A673 (cell line): ENCODE measurements at regions of chr13 and their contacts with region 1.

Region 1: DNA sequence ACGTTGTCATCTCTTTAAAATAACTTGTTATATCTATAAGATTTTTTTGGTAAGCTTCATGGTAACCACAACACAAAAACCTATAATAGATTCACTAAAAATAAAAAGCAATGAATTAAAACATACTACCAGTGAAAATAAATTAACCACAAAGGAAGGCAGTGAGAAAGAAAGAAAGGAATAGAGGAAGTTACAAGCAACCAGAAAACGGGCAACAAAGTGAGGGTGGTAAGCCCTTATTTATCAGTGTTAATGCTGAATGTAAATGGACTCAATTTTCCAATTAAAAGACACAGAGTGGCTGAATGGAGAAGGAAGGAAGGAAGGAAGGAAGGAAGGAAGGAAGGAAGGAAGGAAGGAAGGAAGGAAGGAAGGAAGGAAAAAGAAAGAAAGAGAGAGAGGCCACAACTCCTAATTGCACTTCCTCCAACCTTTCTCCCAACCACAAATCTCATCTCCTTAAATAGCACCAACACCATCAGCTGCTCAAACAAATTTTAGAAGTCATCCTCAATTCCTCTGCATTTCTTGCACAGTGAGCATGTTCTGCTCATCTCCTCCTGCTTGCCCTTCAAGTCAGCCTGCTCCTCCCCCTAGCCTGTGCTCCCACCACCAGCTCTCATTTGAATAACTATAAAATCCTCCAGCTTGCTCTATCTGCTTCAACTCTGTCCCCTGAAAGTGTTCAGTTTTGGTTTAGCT is 48.6 kb downstream of the CCNA1 start:
- DNase-seq: peak; percentile 99
- H3K4me3 ChIP-seq: no peak overlapping the region
- H3K27ac ChIP-seq: peak overlapping the region; percentile 100
- H3K4me1 ChIP-seq: peaks cover 42% of the 10 kb centered on the region
- H3K27me3 ChIP-seq: no peaks in the 10 kb centered on the region
- CTCF ChIP-seq: no peak

Region 2: GRCh38 chr13:36346222-36347083 is 134.4 kb before region 1 on chr13 and contains the start of gene SPART:
- CTCF ChIA-PET with region 1: no interaction called
- POLR2A ChIA-PET with region 1: no interaction called
- intact Hi-C with region 1: loop called (anchors 2 kb)
- DNase-seq: peak; percentile 97
- H3K4me3 ChIP-seq: peak within 1 kb of the TSS; percentile 67
- H3K27ac ChIP-seq: peak within 1 kb of the TSS; percentile 98
- H3K4me1 ChIP-seq: peaks cover 26% of the 10 kb centered on the region
- H3K27me3 ChIP-seq: no peaks in the 10 kb centered on the region
- CTCF ChIP-seq: peak; percentile 99
- total RNA-seq, gene SPART: 169 and 182 TPM in 2 replicates

Region 3: GRCh38 chr13:36555151-36555986 is 74.5 kb after region 1 on chr13:
- CTCF ChIA-PET with region 1: no interaction called
- POLR2A ChIA-PET with region 1: no interaction called
- intact Hi-C with region 1: loop called (anchors 5 kb)
- DNase-seq: peak; percentile 89
- H3K4me3 ChIP-seq: no peak overlapping the region
- H3K27ac ChIP-seq: peak overlapping the region; percentile 96
- H3K4me1 ChIP-seq: peaks cover 36% of the 10 kb centered on the region
- H3K27me3 ChIP-seq: no peaks in the 10 kb centered on the region
- CTCF ChIP-seq: no peak

Region 4: GRCh38 chr13:36673838-36674326 is 193.0 kb after region 1 on chr13 and contains the start of gene SERTM1:
- CTCF ChIA-PET with region 1: no interaction called
- POLR2A ChIA-PET with region 1: no interaction called
- intact Hi-C with region 1: loop called (anchors 5 kb)
- DNase-seq: peak; percentile 93
- H3K4me3 ChIP-seq: peak within 1 kb of the TSS; percentile 66
- H3K27ac ChIP-seq: peak within 1 kb of the TSS; percentile 75
- H3K4me1 ChIP-seq: peaks cover 15% of the 10 kb centered on the region
- H3K27me3 ChIP-seq: no peaks in the 10 kb centered on the region
- CTCF ChIP-seq: no peak
- total RNA-seq, gene SERTM1: 42.9 and 53.5 TPM in 2 replicates

Region 5: DNA sequence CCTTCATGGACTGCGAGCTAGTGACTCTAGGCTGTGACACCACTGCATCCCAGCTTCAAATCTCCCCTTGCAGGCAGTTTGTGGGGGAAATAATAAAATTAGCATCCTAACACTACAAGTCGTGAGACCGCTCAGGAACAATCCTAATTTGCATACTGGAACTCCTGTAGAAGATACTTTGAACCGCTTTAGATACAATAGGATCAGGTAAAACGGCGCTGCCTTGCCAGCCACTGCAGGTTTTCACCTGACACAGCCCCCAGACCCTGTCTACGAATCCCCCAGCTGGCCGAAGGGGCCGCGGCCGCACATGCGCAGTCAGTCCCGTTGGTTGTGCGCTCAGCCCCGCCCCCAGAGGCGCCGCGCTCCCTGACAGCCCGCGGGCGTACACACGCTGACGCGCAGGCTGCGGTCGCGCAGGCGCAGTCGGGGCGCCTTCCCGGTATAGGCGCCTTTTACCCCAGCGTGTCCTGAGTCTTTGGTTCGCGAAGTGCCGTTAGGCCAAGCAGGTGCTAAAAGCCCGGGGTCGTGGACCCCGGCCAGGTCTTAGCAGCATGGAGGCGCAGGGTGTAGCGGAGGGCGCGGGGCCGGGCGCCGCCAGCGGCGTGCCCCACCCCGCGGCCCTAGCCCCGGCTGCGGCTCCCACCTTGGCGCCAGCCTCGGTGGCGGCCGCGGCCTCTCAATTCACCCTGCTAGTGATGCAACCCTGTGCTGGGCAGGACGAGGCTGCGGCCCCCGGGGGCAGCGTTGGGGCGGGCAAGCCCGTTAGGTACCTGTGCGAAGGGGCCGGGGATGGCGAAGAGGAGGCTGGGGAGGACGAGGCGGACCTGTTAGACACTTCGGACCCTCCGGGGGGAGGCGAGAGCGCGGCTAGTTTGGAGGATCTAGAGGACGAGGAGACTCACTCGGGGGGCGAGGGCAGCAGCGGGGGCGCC is 338.2 kb after region 1 on chr13 and contains the start of gene RFXAP:
- CTCF ChIA-PET with region 1: no interaction called
- POLR2A ChIA-PET with region 1: no interaction called
- intact Hi-C with region 1: loop called (anchors 2 kb)
- DNase-seq: peak; percentile 94
- H3K4me3 ChIP-seq: peak within 1 kb of the TSS; percentile 79
- H3K27ac ChIP-seq: peak within 1 kb of the TSS; percentile 89
- H3K4me1 ChIP-seq: peaks cover 31% of the 10 kb centered on the region
- H3K27me3 ChIP-seq: no peaks in the 10 kb centered on the region
- CTCF ChIP-seq: no peak
- total RNA-seq, gene RFXAP: 25.9 and 29.2 TPM in 2 replicates

Region 6: GRCh38 chr13:36981156-36981743 is 500.4 kb after region 1 on chr13:
- CTCF ChIA-PET with region 1: interaction called, 6 read pairs
- POLR2A ChIA-PET with region 1: no interaction called
- intact Hi-C with region 1: loop called (anchors 5 kb)
- DNase-seq: peak; percentile 81
- H3K4me3 ChIP-seq: no peak overlapping the region
- H3K27ac ChIP-seq: peak overlapping the region; percentile 69
- H3K4me1 ChIP-seq: peaks cover 17% of the 10 kb centered on the region
- H3K27me3 ChIP-seq: no peaks in the 10 kb centered on the region
- CTCF ChIP-seq: peak; percentile 69